Activated CD4-positive, alpha-beta T cell treated with anti-CD3 and anti-CD28 coated beads for 36 hours (primary cell): ENCODE measurements at regions of chr16 and their contacts with region 1.

Region 1: DNA sequence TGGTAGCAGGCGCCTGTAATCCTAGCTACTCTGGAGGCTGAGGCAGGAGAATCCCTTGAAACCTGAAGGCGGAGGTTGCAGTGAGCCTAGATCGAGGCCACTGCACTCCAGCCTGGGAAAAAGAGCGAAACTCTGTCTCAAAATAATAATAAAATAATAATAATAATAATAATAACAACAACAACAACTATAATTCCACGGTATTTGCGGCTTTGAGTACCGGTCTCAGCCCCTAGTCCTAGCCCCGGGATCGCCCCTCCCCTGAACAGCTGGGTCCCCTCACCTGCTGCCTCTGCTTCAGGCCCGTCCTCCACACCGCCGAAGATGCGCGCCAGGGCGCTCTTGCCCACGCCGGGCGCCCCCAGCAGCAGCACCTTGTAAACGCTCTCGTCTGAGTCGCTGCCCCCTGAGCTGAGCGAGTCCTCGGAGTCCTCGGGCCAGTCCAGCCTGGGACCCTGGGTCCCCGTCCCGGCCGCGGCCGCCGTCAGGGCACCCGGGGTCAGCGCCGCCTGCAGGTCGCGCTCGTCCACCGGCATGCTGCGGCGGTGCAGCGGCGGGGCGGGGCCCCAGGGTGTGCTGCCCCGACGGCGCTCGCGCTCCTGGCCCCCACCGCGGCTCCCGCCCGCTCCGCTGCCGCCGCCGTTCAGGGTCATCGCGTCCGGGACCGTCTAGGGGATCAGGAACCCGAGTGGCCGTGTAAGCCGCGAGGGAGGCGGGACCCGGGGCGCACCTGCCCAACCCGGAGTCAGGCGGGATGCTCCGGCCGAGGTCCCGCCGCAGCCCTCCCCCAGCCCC is 611 bp downstream of the RRAD start:
- DNase-seq: peak; percentile 73
- ATAC-seq: peak; percentile 75
- H3K4me3 Mint-ChIP-seq: peak overlapping the region; percentile 38
- H3K27ac Mint-ChIP-seq: no peak overlapping the region
- H3K4me1 Mint-ChIP-seq: peaks cover 7% of the 10 kb centered on the region
- H3K27me3 Mint-ChIP-seq: peaks cover 33% of the 10 kb centered on the region

Region 2: GRCh38 chr16:66894948-66895688 is 29.6 kb before region 1 on chr16:
- CTCF ChIA-PET with region 1: interaction called, 19 read pairs
- POLR2A ChIA-PET with region 1: interaction called, 3 read pairs
- intact Hi-C with region 1: loop called (anchors 1 to 2 kb)
- DNase-seq: peak; percentile 81
- ATAC-seq: peak; percentile 89
- H3K4me3 Mint-ChIP-seq: no peak overlapping the region
- H3K27ac Mint-ChIP-seq: no peak overlapping the region
- H3K4me1 Mint-ChIP-seq: peaks cover 8% of the 10 kb centered on the region
- H3K27me3 Mint-ChIP-seq: no peaks in the 10 kb centered on the region